MCF 10A (cell line): ENCODE measurements at regions of chr1 and their contacts with region 1.

Region 1: DNA sequence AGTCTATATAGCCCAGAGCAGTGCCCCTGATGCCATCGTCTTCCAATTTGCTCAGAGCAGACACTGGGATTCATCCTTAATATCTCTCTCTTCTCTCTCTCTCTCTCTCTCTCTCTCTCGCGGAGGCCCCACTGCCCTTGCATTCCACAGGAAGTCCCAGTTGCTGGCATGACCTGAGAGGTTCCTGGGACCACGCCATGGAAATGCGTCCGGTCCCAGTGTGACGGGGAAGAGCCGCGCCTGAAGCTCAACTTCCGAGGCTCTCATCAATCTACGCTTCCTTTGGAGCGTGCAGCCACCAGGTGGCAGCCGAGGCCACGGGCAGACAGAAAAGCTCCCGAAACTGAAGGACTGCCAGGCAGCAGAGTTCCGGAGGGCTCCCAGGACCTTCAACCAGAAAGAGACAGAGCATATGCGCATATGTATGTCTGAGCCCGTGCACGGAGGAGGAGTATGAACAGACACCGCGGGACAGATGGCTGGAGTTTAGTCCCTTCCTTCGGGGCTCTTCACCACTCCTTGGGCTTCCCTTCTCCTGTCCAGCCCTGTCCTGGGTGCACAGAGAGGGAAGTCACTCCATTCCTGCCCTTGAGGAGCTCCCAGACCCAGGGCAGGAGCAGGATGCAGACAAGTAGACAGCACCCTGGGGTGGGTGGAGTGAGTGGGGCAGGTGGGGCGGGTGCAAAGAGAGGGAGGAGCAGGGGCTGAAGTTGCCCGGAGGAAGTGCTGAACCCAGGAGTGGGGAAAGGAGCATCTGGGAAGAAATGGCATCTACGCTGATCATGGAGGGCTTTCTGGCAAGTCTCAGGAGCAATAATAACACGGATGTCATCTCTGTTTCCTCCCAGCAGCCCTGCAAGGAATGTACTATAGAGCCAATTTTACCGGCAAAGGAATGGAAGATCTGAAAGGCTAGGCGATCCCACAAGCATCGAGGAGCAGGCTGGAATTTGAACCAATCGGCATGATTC is 10.5 kb downstream of the PDZK1IP1 start:
- DNase-seq: peak; percentile 93
- H3K4me3 Mint-ChIP-seq: peak overlapping the region; percentile 74
- H3K27ac Mint-ChIP-seq: peak overlapping the region; percentile 99
- H3K4me1 Mint-ChIP-seq: peaks cover 58% of the 10 kb centered on the region
- H3K27me3 Mint-ChIP-seq: no peaks in the 10 kb centered on the region
- CTCF ChIP-seq: peak; percentile 87

Region 2: GRCh38 chr1:46940307-46940706 is 239.0 kb before region 1 on chr1:
- CTCF ChIA-PET with region 1: no interaction called
- POLR2A ChIA-PET with region 1: no interaction called
- intact Hi-C with region 1: no loop called
- DNase-seq: no peak
- H3K4me3 Mint-ChIP-seq: no peak overlapping the region
- H3K27ac Mint-ChIP-seq: no peak overlapping the region
- H3K4me1 Mint-ChIP-seq: peaks cover 9% of the 10 kb centered on the region
- H3K27me3 Mint-ChIP-seq: peaks cover 11% of the 10 kb centered on the region
- CTCF ChIP-seq: no peak

Region 3: GRCh38 chr1:46991083-46991923 is 188.0 kb before region 1 on chr1:
- CTCF ChIA-PET with region 1: no interaction called
- POLR2A ChIA-PET with region 1: no interaction called
- intact Hi-C with region 1: loop called (anchors 10 kb)
- DNase-seq: peak; percentile 52
- H3K4me3 Mint-ChIP-seq: no peak overlapping the region
- H3K27ac Mint-ChIP-seq: no peak overlapping the region
- H3K4me1 Mint-ChIP-seq: peaks cover under 1% of the 10 kb centered on the region
- H3K27me3 Mint-ChIP-seq: peaks cover 3% of the 10 kb centered on the region
- CTCF ChIP-seq: peak; percentile 38

Region 4: DNA sequence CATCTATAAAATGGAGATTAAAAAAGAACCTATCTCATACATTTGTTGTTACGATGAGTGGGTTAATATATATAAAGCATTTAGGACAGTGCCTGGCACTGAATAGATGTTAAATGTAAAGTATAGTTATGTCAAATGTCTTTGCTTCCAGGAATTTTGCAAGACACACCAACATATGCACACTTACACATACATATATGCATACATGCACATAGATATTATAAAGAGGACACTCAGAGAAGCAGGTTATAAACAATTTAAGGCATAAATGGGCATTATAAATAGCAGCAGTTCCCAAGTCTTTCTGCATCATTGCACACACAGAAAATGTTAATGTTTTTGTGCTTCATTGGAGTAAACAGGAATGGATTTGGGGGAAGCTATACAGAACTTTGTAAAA is 142.5 kb before region 1 on chr1:
- CTCF ChIA-PET with region 1: no interaction called
- POLR2A ChIA-PET with region 1: no interaction called
- intact Hi-C with region 1: no loop called
- DNase-seq: no peak
- H3K4me3 Mint-ChIP-seq: no peak overlapping the region
- H3K27ac Mint-ChIP-seq: no peak overlapping the region
- H3K4me1 Mint-ChIP-seq: peaks cover 26% of the 10 kb centered on the region
- H3K27me3 Mint-ChIP-seq: no peaks in the 10 kb centered on the region
- CTCF ChIP-seq: no peak

Region 5: GRCh38 chr1:47164552-47164951 is 14.8 kb before region 1 on chr1:
- CTCF ChIA-PET with region 1: interaction called, 24 read pairs
- POLR2A ChIA-PET with region 1: no interaction called
- intact Hi-C with region 1: no loop called
- DNase-seq: no peak
- H3K4me3 Mint-ChIP-seq: no peak overlapping the region
- H3K27ac Mint-ChIP-seq: no peak overlapping the region
- H3K4me1 Mint-ChIP-seq: no peaks in the 10 kb centered on the region
- H3K27me3 Mint-ChIP-seq: no peaks in the 10 kb centered on the region
- CTCF ChIP-seq: no peak

Region 6: GRCh38 chr1:47313915-47314664 is 134.8 kb after region 1 on chr1 and contains the start of gene STIL:
- CTCF ChIA-PET with region 1: interaction called, 6 read pairs
- POLR2A ChIA-PET with region 1: interaction called, 12 read pairs
- intact Hi-C with region 1: no loop called
- DNase-seq: peak; percentile 99
- H3K4me3 Mint-ChIP-seq: peak within 1 kb of the TSS; percentile 91
- H3K27ac Mint-ChIP-seq: peak within 1 kb of the TSS; percentile 94
- H3K4me1 Mint-ChIP-seq: peaks cover 5% of the 10 kb centered on the region
- H3K27me3 Mint-ChIP-seq: no peaks in the 10 kb centered on the region
- CTCF ChIP-seq: no peak
- total RNA-seq, gene STIL: 8.8 and 12.6 TPM in 2 replicates

Region 7: DNA sequence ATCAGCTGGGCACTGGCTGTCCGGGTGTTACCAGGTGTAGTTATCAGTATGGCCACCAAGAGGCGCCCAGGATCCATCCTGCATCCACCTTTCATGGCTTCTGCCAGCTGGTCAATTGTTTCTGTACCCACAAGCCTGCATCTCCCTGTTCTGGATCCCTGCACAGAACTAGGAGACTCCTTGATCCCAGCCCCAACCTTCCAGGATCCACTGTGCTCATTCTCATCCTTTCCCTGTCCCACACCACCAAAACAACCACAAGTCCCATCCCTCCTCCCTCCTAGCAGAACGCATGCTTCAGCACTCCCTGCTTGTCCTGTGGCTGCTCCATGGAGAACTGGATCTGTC is 209.6 kb after region 1 on chr1:
- CTCF ChIA-PET with region 1: interaction called, 6 read pairs
- POLR2A ChIA-PET with region 1: no interaction called
- intact Hi-C with region 1: loop called (anchors 1 kb)
- DNase-seq: peak; percentile 81
- H3K4me3 Mint-ChIP-seq: no peak overlapping the region
- H3K27ac Mint-ChIP-seq: no peak overlapping the region
- H3K4me1 Mint-ChIP-seq: no peaks in the 10 kb centered on the region
- H3K27me3 Mint-ChIP-seq: no peaks in the 10 kb centered on the region
- CTCF ChIP-seq: peak; percentile 94

Region 8: DNA sequence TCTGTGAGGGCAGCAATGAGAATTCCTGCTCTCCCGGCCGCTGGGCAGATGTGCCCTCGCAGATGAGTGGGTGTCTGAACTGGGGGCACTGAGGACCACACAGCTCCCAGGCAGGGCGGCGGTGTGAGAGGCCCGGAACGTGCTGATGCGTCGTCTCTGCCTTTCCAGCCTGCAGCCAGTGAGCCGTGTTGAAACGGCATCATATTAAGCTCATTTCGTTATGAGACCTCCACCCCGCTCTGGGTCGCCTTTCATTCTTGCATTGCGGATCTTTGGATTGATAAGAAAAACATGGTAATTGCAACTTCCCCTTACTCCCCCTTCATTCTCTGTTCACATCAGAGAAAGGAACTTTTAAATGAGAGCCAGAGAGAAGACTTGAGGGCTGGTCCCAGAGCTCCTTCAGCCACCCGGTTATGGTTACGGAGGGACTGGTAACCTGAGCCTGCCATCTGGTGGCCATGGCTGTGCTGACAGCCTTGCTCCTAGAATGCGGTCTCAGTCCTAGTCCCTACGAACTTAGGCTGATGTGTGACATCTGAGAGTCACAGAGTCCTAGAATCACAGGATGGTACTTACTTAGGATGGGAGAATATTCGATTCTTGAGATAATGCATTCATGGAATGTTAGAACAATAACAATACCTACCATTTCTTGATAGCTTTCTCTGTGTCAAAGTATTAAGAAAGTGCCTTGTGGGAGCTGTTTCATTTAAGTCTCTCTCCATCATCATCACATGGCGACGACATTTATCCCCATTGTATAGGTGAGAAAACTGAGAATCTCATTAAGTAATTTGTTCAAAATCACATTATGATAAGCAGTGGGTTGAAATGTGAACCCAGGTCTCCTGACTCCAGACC is 546.9 kb after region 1 on chr1:
- CTCF ChIA-PET with region 1: interaction called, 12 read pairs
- POLR2A ChIA-PET with region 1: interaction called, 4 read pairs
- intact Hi-C with region 1: loop called (anchors 5 kb)
- DNase-seq: peak; percentile 76
- H3K4me3 Mint-ChIP-seq: peak overlapping the region; percentile 22
- H3K27ac Mint-ChIP-seq: no peak overlapping the region
- H3K4me1 Mint-ChIP-seq: peaks cover 9% of the 10 kb centered on the region
- H3K27me3 Mint-ChIP-seq: no peaks in the 10 kb centered on the region
- CTCF ChIP-seq: peak; percentile 75